ENCODE measurements at regions of chr3 and their contacts with region 1.

Region 1: GRCh38 chr3:20185701-20186598 is at the start of gene SGO1:
- DNase-seq: peak; percentile 97 to 98
- ATAC-seq: peak; percentile 97 to 98
- H3K4me3 ChIP-seq: peak within 1 kb of the TSS; percentile 69 to 81 (median 72)
- H3K27ac ChIP-seq: peak within 1 kb of the TSS; percentile 86 to 94 (median 92)
- H3K4me1 ChIP-seq: peaks cover 14 to 22% of the 10 kb centered on the region in 2 donors
- H3K27me3 ChIP-seq: no peaks in the 10 kb centered on the region
- CTCF ChIP-seq: peak in 2 of 5 experiments; percentile 18 to 33
- POLR2A ChIP-seq: peak; percentile 73 to 84
- total RNA-seq, gene SGO1: 0.18 TPM in 1 of 4 donors, not detected in the others

Region 2: DNA sequence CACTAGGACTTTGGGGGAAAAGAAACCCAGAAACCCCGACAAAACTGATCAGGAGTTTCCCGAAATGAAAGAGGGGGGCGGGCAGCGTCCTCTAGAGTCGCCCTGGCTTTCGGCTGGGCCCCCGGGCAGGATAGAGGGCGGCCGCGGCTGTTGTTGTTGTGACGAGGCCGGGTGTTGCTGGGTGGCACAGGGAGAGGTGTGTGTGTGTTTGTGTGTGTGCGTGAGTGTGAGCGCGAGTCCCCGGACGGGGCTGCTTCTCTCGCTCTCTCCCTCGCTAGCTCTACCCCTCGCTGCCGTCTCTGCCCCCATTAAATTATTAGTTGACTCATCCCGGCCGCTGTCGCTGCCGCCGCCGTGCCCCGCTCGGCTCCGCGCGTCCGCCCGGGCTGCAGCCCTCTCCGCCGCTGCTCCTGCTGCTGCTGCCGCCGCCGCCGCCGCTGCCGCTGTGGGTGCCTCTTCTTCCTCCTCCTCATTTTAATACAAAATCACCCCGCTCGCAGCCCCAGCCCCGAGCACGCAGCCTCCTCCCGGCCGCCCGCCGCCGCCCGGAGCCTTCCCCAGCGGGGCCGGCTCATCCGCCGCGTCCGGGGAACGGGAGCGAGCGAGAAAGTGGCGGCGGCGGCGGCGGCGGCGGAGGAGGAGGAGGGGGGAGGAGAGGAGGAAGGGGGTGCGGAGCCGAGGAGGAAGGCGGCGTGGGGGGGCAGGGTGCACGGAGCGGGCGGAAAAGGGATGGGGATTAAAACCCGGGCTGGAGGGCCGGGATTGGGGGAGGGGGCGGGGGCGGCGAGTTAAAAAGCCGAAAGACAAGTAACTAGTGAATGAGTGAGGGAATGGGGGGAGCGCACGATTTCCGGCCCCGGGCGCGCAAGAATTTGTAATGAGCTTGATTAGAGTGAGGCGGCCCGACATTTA is 1761.0 kb before region 1 on chr3 and contains the start of gene SATB1:
- in situ Hi-C with region 1: no loop called
- intact Hi-C with region 1: loop called (anchors 5 kb)
- DNase-seq: peak; percentile 74 to 75
- ATAC-seq: peak; percentile 75 to 81
- H3K4me3 ChIP-seq: peak within 1 kb of the TSS; percentile 78 to 98 (median 92)
- H3K27ac ChIP-seq: peak within 1 kb of the TSS; percentile 91 to 99 (median 95)
- H3K4me1 ChIP-seq: peaks cover 22 to 29% of the 10 kb centered on the region in 2 donors
- H3K27me3 ChIP-seq: no peaks in the 10 kb centered on the region
- CTCF ChIP-seq: peak in 1 of 5 experiments; percentile 6
- POLR2A ChIP-seq: peak; percentile 62 to 83
- total RNA-seq, gene SATB1: 40.9 to 69.6 (median 41.7) TPM

Region 3: GRCh38 chr3:19822805-19823204 is 363.1 kb before region 1 on chr3:
- in situ Hi-C with region 1: no loop called
- intact Hi-C with region 1: no loop called
- DNase-seq: no peak
- ATAC-seq: no peak
- H3K4me3 ChIP-seq: no peak overlapping the region
- H3K27ac ChIP-seq: no peak overlapping the region
- H3K4me1 ChIP-seq: no peaks in the 10 kb centered on the region
- H3K27me3 ChIP-seq: no peaks in the 10 kb centered on the region
- CTCF ChIP-seq: no peak
- POLR2A ChIP-seq: no peak

Region 4: GRCh38 chr3:19946832-19947548 is 239.0 kb before region 1 on chr3 and contains the start of gene RAB5A:
- in situ Hi-C with region 1: loop called in 3 of 4 experiments (anchors 5 to 25 kb)
- intact Hi-C with region 1: loop called (anchors 1 kb)
- DNase-seq: peak; percentile 97
- ATAC-seq: peak; percentile 97
- H3K4me3 ChIP-seq: peak within 1 kb of the TSS; percentile 74 to 95 (median 84)
- H3K27ac ChIP-seq: peak within 1 kb of the TSS; percentile 94 to 97 (median 96)
- H3K4me1 ChIP-seq: peaks cover 24 to 31% of the 10 kb centered on the region in 2 donors
- H3K27me3 ChIP-seq: no peaks in the 10 kb centered on the region
- CTCF ChIP-seq: peak in 3 of 5 experiments; percentile 11 to 47 (median 41)
- POLR2A ChIP-seq: peak; percentile 88 to 91
- total RNA-seq, gene RAB5A: 30.9 to 43.7 (median 35.5) TPM

Region 5: GRCh38 chr3:19961960-19962359 is 224.0 kb before region 1 on chr3:
- in situ Hi-C with region 1: no loop called
- intact Hi-C with region 1: loop called (anchors 5 kb)
- DNase-seq: no peak
- ATAC-seq: peak; percentile 52 to 84
- H3K4me3 ChIP-seq: no peak overlapping the region
- H3K27ac ChIP-seq: no peak overlapping the region
- H3K4me1 ChIP-seq: peaks cover 6 to 11% of the 10 kb centered on the region in 2 donors
- H3K27me3 ChIP-seq: no peaks in the 10 kb centered on the region
- CTCF ChIP-seq: no peak
- POLR2A ChIP-seq: no peak

Region 6: DNA sequence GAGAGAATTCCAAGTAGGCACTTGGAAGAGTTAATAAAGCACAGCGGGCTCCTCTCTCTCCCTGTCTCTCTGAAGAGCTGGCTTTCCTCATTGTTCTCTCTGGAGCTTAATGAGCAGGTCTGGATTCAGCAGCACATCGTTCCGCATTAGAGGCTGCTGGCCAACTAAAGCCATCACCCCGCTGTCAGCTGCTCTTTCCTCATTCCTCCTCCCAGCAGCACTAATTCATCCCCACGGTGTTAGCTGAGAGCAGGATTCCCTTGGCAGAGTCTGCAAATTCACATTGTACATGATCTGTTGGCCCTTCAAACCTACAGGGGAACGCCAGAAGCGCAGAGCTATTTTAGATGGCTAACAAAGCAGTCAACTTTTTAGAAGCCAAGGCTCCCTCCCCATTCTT is 44.1 kb before region 1 on chr3:
- in situ Hi-C with region 1: no loop called
- intact Hi-C with region 1: no loop called
- DNase-seq: peak; percentile 13 to 46
- ATAC-seq: peak; percentile 81 to 89
- H3K4me3 ChIP-seq: no peak overlapping the region
- H3K27ac ChIP-seq: peak overlapping the region in 3 of 4 donors; percentile 11 to 56 (median 18)
- H3K4me1 ChIP-seq: peaks cover 9 to 13% of the 10 kb centered on the region in 2 donors
- H3K27me3 ChIP-seq: no peaks in the 10 kb centered on the region
- CTCF ChIP-seq: no peak
- POLR2A ChIP-seq: no peak

Measured in gastrocnemius medialis (tissue), 4 donors.